H1 (cell line): ENCODE measurements at regions of chr5 and their contacts with region 1.

Region 1: DNA sequence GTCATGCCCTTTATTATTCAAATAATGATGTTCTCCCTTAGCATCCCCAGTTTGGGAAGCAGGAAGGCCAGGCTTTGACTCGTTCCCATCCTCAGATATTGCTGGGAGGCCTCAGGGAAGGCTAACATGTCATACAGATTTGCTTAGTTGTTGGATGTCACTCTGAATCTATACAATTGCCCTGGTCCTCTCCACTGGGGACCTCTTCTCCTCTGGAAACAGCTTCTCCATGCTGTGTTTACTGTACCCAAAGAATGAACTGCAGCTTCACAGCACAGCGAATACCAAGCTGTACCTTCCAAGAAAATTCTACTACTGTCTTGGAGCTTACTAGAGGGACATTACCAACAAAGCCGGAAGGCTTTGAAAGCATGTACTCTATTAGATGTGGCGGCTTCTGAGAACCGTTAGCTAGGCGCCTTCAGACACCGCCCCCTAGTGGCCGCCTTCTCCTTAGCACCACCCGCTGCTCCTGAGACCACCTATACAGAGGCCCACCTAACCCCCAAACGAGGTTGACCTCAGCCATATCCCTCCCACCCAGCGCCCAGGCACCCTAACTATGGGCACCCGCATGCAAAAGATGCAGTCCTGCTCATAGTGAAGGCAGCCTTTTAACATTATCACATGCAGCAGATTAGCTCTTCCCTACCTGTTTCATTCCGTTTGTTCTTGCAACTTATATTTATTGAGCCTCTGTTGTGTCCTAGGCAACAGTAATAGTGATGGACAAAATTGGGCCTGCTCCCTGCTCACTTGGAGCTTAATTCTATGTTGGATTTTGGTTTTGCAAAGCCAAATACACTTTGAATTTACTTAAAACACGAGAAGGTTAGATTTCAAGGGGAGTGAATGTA is 34.9 kb upstream of the FOXI1 start:
- DNase-seq: peak; percentile 17 to 90
- H3K4me3 ChIP-seq: no peak overlapping the region
- H3K27ac ChIP-seq: no peak overlapping the region
- H3K4me1 ChIP-seq: no peaks in the 10 kb centered on the region
- H3K27me3 ChIP-seq: no peaks in the 10 kb centered on the region; a peak in 1 of 7 replicates
- CTCF ChIP-seq: peak; percentile 74 to 82 (median 81)
- EP300 ChIP-seq: no peak
- POLR2A ChIP-seq: no peak
- RAD21 ChIP-seq: peak; percentile 72 to 78

Region 2: GRCh38 chr5:169706758-169707691 is 363.8 kb before region 1 on chr5:
- CTCF ChIA-PET with region 1: interaction called, 14 read pairs
- POLR2A ChIA-PET with region 1: no interaction called
- DNase-seq: no peak
- H3K4me3 ChIP-seq: no peak overlapping the region
- H3K27ac ChIP-seq: no peak overlapping the region
- H3K4me1 ChIP-seq: no peaks in the 10 kb centered on the region
- H3K27me3 ChIP-seq: no peaks in the 10 kb centered on the region
- CTCF ChIP-seq: no peak
- EP300 ChIP-seq: no peak
- POLR2A ChIP-seq: no peak
- RAD21 ChIP-seq: no peak

Region 3: DNA sequence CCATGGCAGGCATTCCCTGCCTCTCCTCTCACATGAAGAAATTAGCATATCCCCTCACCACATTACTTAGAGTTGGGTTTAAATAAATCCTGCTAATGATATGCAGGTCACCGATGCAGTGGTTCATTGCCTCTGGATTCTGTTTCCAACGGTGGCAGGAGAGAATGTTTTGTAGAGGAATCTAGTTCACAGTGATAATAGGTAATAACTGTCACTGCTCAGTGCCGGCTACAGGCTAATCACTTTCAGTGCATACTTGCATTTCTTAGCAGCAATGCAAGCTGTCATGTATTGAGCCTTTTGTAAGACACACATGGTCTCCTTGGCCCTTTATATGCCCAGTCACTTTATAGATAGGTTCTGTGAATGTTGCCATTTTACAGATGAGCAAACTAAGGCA is 31.0 kb before region 1 on chr5:
- CTCF ChIA-PET with region 1: interaction called, 24 read pairs
- POLR2A ChIA-PET with region 1: no interaction called
- DNase-seq: no peak
- H3K4me3 ChIP-seq: no peak overlapping the region
- H3K27ac ChIP-seq: no peak overlapping the region
- H3K4me1 ChIP-seq: no peaks in the 10 kb centered on the region
- H3K27me3 ChIP-seq: no peaks in the 10 kb centered on the region
- CTCF ChIP-seq: no peak
- EP300 ChIP-seq: no peak
- POLR2A ChIP-seq: no peak
- RAD21 ChIP-seq: no peak

Region 4: GRCh38 chr5:170109059-170110031 is 38.6 kb after region 1 on chr5:
- CTCF ChIA-PET with region 1: no interaction called
- POLR2A ChIA-PET with region 1: no interaction called
- DNase-seq: no peak
- H3K4me3 ChIP-seq: no peak overlapping the region
- H3K27ac ChIP-seq: no peak overlapping the region
- H3K4me1 ChIP-seq: peaks cover 2 to 17% (median 9%) of the 10 kb centered on the region in 4 experiments
- H3K27me3 ChIP-seq: peaks cover 0 to 50% (median 21%) of the 10 kb centered on the region in 4 experiments; a peak in 6 of 7 replicates
- CTCF ChIP-seq: peak in 1 of 3 experiments; percentile 2; a peak in 1 of 4 replicates
- EP300 ChIP-seq: no peak
- POLR2A ChIP-seq: no peak
- RAD21 ChIP-seq: no peak

Region 5: DNA sequence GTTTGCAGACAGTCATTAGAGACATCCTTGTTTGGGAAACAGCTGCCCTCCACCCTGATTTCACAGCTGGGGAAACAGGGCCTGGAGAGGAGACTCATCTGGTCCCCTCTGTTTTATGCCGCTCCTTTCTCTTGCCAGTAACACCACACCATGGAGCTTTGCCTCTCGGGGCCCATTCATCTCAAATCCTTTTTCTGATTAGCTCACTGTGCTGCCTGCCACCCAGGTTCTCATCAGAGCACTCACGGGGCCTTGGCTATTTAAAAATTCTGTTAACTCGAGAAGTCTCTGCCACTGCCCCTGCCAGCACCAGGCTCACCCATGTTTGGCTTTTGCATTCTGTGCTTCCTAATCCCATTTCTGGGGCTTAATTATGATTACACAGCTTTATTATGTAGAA is 125.2 kb after region 1 on chr5:
- CTCF ChIA-PET with region 1: interaction called, 10 read pairs
- POLR2A ChIA-PET with region 1: no interaction called
- DNase-seq: no peak
- H3K4me3 ChIP-seq: no peak overlapping the region
- H3K27ac ChIP-seq: no peak overlapping the region
- H3K4me1 ChIP-seq: no peaks in the 10 kb centered on the region; a peak in 2 of 7 replicates
- H3K27me3 ChIP-seq: no peaks in the 10 kb centered on the region
- CTCF ChIP-seq: no peak
- EP300 ChIP-seq: no peak
- POLR2A ChIP-seq: no peak
- RAD21 ChIP-seq: no peak